PC-9 (cell line): ENCODE measurements at regions of chr3 and their contacts with region 1.

Region 1: GRCh38 chr3:131636266-131636775 is 133.6 kb upstream of the MRPL3 start:
- DNase-seq: no peak
- H3K4me3 ChIP-seq: no peak overlapping the region
- H3K27ac ChIP-seq: no peak overlapping the region
- H3K4me1 ChIP-seq: no peaks in the 10 kb centered on the region
- H3K27me3 ChIP-seq: no peaks in the 10 kb centered on the region
- CTCF ChIP-seq: no peak

Region 2: DNA sequence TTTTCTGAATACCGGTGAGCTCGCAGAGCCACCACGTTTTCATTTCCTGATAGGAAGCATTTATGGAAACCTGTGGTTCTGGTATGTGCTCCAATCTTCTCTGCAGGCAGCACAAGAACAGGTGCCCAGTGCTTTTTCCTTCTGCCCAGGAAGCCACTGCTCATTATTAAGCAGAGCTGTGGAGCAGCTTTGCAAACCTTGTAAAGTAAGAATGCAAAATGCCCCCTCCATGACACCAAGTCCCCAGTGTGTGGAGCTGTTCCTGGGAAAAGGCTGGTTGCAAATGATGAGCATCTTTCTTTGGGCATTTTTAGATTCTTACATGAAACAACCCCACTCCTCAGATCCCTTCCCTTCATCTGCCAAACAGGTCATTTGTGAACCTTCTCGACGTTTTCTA is 67.9 kb before region 1 on chr3:
- CTCF ChIA-PET with region 1: interaction called, 20 read pairs
- POLR2A ChIA-PET with region 1: no interaction called
- intact Hi-C with region 1: no loop called
- DNase-seq: no peak
- H3K4me3 ChIP-seq: no peak overlapping the region
- H3K27ac ChIP-seq: no peak overlapping the region
- H3K4me1 ChIP-seq: peaks cover 19% of the 10 kb centered on the region
- H3K27me3 ChIP-seq: no peaks in the 10 kb centered on the region
- CTCF ChIP-seq: no peak

Region 3: GRCh38 chr3:131973731-131974130 is 337.4 kb after region 1 on chr3:
- CTCF ChIA-PET with region 1: no interaction called
- POLR2A ChIA-PET with region 1: no interaction called
- intact Hi-C with region 1: no loop called
- DNase-seq: no peak
- H3K4me3 ChIP-seq: no peak overlapping the region
- H3K27ac ChIP-seq: no peak overlapping the region
- H3K4me1 ChIP-seq: no peaks in the 10 kb centered on the region
- H3K27me3 ChIP-seq: no peaks in the 10 kb centered on the region
- CTCF ChIP-seq: no peak